Astrocyte of the cerebellum (primary cell): ENCODE measurements at regions of chr16 and their contacts with region 1.

Region 1: DNA sequence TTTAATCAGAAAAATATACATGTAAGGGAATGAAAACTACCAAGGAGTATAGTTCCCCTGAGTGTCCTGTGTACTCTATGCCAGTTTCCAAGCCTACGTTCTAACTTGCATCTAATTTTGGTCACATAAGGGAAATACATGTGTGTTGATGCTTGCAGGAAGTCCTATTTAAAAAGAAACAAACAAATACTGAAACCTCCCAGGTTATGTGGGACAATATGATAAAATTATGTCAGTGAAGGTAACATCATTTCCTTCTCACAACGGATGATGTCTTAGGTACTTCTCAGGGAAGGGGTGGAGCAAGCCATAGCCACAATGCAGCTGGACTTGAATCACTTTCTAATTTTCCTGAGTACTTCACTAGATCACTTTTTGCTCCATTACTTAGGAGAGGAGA is 115.9 kb downstream of the ZFHX3 start:
- DNase-seq: no peak
- H3K4me3 ChIP-seq: no peak overlapping the region
- CTCF ChIP-seq: no peak

Region 2: DNA sequence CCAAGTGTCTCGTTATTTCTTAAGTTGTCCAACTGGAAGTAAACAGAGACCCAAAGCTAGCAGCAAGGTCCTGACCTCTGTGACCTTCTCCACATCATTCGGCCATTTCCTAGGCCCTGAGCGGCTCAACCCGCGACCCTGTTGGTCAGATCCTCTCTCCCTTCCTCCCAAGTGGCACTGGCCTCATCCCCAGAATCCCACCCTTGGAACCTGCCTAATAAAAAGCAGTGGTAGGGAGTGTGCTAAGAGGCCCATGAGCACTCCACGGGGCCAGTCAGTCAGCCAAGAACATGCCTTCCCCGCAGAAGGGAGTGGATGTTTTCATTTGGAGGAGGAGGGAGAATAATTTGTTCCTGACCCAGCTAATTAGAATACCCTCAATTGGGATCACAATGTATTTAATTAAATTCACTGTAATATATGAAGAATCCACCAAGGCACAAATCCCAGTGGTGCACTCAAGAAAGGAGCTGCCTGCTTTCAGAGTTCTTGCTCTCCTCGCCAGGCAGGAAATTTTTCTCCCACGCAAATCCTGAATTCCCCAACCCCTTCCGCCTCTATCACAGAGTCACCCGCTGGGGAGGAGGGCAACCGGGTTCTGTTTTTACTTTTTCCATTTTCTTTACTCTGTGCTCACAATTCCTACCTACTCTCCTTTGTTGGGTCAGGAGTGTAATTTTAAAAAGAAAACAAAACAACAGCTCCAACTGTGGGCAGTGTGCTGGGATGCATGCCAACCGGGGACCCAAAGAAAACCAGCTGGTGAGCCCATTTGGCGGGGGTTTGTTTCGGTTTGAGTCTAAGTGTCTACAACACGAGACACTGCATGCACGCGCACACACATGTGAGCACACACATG is 37.5 kb before region 1 on chr16:
- in situ Hi-C with region 1: loop called (anchors 5 kb)
- DNase-seq: no peak
- H3K4me3 ChIP-seq: no peak overlapping the region
- CTCF ChIP-seq: no peak

Region 3: GRCh38 chr16:72961121-72961763 is 29.2 kb after region 1 on chr16:
- in situ Hi-C with region 1: no loop called
- DNase-seq: no peak
- H3K4me3 ChIP-seq: no peak overlapping the region
- CTCF ChIP-seq: peak; percentile 51